Aorta (tissue), 5 donors: ENCODE measurements at regions of chr12 and their contacts with region 1.

Region 1: GRCh38 chr12:15208125-15208524 is 13.1 kb downstream of the RERG start:
- DNase-seq: no peak
- ATAC-seq: no peak
- H3K4me3 ChIP-seq: no peak overlapping the region
- H3K27ac ChIP-seq: peak overlapping the region in 1 of 2 donors; percentile 75
- H3K4me1 ChIP-seq: peaks cover 7 to 14% of the 10 kb centered on the region in 2 donors
- H3K27me3 ChIP-seq: no peaks in the 10 kb centered on the region

Region 2: DNA sequence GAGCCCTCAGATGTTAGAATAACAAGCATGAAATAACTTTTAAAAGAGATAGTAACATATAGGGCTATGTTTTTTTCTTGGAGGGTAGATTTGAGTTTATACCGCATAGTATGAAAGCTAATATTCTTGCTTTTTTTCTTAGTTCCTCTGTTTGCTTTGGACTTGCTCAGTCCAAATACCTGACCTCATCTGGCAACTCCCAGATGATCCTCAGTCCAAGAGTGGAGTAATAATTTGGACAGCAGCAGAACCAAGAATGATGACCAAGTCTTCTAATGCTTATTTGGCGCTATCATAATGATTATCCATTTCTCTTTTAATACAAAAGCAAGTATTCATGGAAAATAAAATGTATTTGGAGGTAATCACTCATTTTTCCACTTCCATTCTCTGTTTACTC is 557.3 kb before region 1 on chr12:
- intact Hi-C with region 1: loop called in 1 of 2 experiments (anchors 5 kb)
- DNase-seq: no peak
- ATAC-seq: peak; percentile 75
- H3K4me3 ChIP-seq: no peak overlapping the region
- H3K27ac ChIP-seq: no peak overlapping the region
- H3K4me1 ChIP-seq: no peaks in the 10 kb centered on the region
- H3K27me3 ChIP-seq: no peaks in the 10 kb centered on the region